HepG2 (cell line): ENCODE measurements at regions of chr4 and their contacts with region 1.

Region 1: DNA sequence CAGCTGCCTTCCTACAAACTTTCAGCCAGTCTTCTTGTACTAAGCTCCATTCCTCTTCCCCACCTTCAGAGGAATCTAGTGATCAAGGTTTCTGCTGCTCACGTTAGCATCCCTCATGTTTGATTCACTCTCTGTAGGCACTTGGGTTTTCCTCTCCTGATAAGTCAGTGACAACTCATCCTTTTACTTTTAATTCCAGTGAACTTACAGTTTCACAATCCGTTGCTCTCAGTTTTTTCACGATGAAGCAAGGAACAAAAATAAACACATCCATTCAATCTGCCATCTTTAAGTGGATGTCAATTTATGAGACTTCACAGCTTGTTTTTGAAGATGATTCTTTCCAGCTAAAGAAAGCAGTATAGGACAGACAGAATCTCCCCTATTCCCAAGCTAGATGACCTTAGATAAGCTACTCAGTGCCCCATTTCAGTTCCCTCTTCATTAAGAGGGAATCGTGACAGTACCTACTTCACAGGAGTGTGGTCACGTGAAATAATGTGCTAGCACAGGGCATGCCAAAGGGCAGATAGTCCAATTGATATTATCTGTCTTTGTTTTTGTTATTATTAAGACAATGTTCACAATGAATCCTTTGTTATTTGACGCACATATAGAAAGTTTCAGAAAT is 234.3 kb downstream of the PALLD start:
- DNase-seq: no peak
- ATAC-seq: no peak
- H3K4me3 ChIP-seq: no peak overlapping the region
- H3K27ac ChIP-seq: no peak overlapping the region
- H3K4me1 ChIP-seq: no peaks in the 10 kb centered on the region
- H3K27me3 ChIP-seq: peaks cover 0 to under 1% of the 10 kb centered on the region in 2 experiments; a peak in 1 of 5 replicates
- CTCF ChIP-seq: no peak
- EP300 ChIP-seq: no peak
- POLR2A ChIP-seq: no peak
- RAD21 ChIP-seq: no peak

Region 2: DNA sequence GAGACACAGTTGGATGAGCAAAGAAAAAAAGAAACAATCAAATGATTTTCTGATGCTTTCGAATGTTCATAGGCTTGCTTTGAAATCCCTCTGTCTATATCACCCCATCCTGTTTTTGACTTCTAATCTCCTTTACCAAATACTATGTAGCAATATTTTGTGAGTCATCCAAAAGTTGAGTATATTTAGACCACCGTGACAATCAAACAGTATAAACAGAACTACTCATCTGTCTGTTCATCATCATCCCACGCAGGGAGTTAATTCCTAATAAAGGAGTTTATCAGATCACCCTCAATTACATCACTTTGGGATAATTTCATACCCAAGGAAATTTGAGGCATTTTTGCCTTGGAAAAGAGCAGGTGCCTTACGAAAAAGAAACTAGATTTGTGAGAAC is 66.1 kb after region 1 on chr4:
- CTCF ChIA-PET with region 1: no interaction called
- POLR2A ChIA-PET with region 1: no interaction called
- in situ Hi-C with region 1: no loop called
- intact Hi-C with region 1: loop called (anchors 10 kb)
- DNase-seq: peak; percentile 56
- ATAC-seq: no peak
- H3K4me3 ChIP-seq: no peak overlapping the region; a peak in 1 of 6 replicates
- H3K27ac ChIP-seq: no peak overlapping the region
- H3K4me1 ChIP-seq: peaks cover 26% of the 10 kb centered on the region
- H3K27me3 ChIP-seq: no peaks in the 10 kb centered on the region
- CTCF ChIP-seq: no peak
- EP300 ChIP-seq: no peak
- POLR2A ChIP-seq: no peak
- RAD21 ChIP-seq: no peak